ENCODE measurements at regions of chrX and their contacts with region 1.

Region 1: DNA sequence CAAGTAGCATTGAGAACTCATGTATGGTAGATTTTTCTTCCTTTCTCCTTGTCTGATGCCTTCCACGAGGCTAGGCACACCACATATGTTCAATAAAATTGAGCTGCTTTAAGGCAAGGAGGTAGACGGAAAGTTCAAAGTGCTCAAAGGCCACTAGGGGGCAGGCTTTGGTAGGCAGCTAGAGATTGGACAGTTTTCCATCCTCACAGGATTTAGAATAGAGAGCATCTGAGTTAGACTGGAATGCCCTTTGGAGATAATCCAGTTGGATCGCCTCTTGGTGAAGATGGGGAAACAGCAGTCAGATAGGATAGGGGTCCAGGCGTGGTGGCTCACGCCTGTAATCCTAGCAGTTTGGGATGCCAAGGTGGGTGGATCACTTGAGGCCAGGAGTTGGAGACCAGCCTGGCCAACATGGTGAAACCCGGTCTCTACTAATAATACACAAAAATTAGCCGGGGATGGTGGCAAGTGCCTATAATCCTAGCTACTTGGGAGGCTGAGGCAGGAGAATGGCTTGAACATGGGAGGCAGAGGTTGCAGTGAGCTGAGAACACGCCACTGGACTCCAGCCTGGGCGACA is 30.4 kb downstream of the ELF4 start:
- DNase-seq: peak; percentile 68
- ATAC-seq: no peak
- H3K4me3 Mint-ChIP-seq: no peak overlapping the region
- H3K27ac Mint-ChIP-seq: peak overlapping the region; percentile 46
- H3K4me1 Mint-ChIP-seq: peaks cover 50% of the 10 kb centered on the region
- H3K27me3 Mint-ChIP-seq: no peaks in the 10 kb centered on the region

Region 2: DNA sequence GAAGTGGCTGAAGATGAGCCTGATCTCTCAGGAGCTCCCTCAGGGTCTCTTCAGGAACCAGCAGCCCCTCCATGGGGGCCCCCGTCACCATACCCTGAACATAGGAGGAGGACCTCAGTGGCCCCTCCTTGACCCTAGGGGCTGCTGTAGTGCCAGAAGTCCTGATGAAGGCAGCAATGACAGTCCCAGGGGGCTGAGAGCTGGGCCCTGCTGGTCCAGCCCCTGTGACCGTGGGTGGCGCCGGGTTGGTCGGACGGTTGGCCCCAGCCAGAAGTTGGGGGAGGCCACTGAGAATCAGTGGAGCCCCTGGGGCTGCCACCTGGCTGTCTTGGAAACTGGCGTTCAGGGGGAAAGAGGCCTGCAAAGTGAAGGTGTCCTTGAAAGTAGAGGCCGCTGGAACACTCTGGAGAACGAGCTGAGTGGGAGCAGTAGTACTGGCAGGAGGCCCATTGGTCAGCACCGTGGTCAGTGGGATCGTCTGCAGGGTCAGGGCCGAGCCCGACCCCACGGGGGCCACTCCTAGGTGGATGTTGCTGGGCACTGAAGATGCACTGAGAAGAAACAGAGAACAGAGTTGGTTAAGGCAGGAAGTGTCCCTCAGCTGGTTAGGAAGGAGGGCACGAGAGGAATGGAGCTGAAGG is 12.8 kb before region 1 on chrX:
- CTCF ChIA-PET with region 1: interaction called, 14 read pairs
- POLR2A ChIA-PET with region 1: no interaction called
- DNase-seq: no peak
- ATAC-seq: no peak
- H3K4me3 Mint-ChIP-seq: no peak overlapping the region
- H3K27ac Mint-ChIP-seq: no peak overlapping the region
- H3K4me1 Mint-ChIP-seq: no peaks in the 10 kb centered on the region
- H3K27me3 Mint-ChIP-seq: no peaks in the 10 kb centered on the region

Region 3: DNA sequence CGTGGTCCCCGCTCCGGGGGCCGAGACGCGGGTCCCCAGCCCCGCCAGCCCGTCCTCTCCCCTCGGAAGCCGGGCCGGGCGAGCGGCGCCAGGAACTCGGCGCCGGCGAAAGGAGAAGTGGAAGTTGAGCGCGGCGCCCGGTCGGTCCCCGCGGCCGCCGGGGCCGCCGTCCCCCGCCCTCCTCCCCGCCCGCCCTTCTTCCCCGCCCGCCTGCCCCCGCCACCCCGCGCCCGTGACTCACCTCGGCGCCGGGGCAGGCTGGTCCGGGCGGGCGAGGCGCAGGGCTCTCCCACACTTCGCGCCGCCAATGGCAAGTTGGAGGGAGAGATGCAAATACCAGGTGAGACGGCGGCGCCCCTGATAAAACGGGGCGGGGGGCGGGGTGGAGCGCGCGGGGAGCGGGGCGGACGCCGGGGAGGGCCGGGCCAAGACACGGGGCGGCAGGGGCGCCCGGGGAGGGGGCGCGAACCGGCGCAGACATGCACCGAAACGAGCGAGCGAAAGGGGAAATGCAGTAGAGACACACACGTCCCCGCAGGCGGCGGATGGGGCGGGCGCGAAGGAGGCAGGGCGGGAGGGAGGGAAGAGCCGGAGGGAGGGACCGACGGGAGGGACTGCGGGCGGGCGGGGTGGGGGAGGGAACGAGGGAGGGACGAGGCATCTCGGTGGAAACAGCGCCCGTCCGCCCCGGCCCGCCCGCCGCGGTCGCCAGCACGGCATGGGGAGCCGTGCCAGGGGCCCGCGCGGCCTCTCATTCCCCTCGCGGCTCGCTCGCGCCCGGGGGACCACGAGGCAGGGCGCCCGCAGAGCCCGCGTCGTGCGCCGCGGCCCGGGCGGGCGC is 30.7 kb after region 1 on chrX and contains the start of gene ELF4:
- CTCF ChIA-PET with region 1: interaction called, 10 read pairs
- POLR2A ChIA-PET with region 1: interaction called, 6 read pairs
- DNase-seq: peak; percentile 57
- ATAC-seq: peak; percentile 69
- H3K4me3 Mint-ChIP-seq: peak within 1 kb of the TSS; percentile 89
- H3K27ac Mint-ChIP-seq: peak within 1 kb of the TSS; percentile 85
- H3K4me1 Mint-ChIP-seq: peaks cover 43% of the 10 kb centered on the region
- H3K27me3 Mint-ChIP-seq: no peaks in the 10 kb centered on the region
- total RNA-seq, gene ELF4: 38.2 to 39.0 TPM

Region 4: DNA sequence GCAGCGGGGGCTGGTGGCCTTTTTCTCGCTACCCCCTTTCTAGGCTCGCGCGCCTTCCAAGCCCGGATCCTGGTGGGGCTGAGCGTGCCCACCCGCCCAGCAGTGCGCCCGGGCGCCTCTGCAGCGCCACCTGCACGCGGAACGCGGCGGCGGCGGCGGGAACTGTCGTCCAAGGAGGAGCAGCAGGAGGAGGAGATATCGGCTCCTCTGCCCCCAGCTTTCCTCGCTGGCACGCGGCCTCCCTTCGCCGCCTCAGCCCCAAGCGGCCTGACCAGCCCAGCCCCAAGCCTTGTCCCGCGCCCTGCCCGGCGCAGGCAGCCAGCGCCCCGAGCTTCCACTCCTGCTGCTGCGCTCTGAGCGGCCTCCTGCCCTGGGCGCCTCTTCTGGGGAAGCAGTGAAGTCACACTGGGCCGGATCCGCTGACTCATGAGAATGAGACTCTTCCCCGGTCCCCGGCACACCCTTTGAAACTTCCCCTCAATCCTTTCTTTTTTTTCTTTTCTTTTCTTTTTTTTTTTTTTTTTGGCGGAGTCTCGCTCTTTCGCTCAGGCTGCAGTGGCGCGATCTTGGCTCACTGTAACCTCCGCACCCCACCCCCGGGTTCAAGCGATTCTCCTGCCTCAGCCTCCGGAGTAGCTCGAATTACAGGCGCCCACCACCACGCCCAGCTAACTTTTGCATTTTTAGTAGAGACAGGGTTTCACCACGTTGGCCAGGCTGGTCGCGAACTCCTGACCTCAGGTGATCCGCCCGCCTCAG is 41.0 kb after region 1 on chrX:
- CTCF ChIA-PET with region 1: interaction called, 72 read pairs
- POLR2A ChIA-PET with region 1: interaction called, 5 read pairs
- DNase-seq: peak; percentile 71
- ATAC-seq: peak; percentile 94
- H3K4me3 Mint-ChIP-seq: peak overlapping the region; percentile 63
- H3K27ac Mint-ChIP-seq: no peak overlapping the region
- H3K4me1 Mint-ChIP-seq: peaks cover 28% of the 10 kb centered on the region
- H3K27me3 Mint-ChIP-seq: no peaks in the 10 kb centered on the region

Region 5: DNA sequence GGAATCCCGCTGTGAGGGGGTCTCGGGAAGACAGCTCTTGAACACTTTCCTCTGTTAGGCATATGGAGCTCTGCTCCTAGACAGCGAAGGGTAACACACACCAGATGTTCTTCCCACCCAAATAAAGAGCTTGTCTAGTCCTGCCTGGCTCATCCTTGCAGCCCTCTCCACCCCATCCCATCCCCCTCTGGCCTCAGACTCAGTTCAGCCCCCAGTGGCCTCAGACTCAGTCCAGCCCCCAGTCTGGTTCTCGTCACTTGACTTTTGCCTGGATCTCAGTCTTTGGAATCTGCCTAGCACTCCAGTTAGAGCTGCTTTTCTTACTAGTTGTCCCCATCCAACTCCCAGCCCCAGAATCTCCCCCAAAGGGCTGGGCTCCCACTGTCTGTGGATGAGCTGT is 106.7 kb after region 1 on chrX:
- CTCF ChIA-PET with region 1: interaction called, 65 read pairs
- POLR2A ChIA-PET with region 1: no interaction called
- DNase-seq: no peak
- ATAC-seq: no peak
- H3K4me3 Mint-ChIP-seq: no peak overlapping the region
- H3K27ac Mint-ChIP-seq: no peak overlapping the region
- H3K4me1 Mint-ChIP-seq: peaks cover 20% of the 10 kb centered on the region
- H3K27me3 Mint-ChIP-seq: no peaks in the 10 kb centered on the region

Region 6: DNA sequence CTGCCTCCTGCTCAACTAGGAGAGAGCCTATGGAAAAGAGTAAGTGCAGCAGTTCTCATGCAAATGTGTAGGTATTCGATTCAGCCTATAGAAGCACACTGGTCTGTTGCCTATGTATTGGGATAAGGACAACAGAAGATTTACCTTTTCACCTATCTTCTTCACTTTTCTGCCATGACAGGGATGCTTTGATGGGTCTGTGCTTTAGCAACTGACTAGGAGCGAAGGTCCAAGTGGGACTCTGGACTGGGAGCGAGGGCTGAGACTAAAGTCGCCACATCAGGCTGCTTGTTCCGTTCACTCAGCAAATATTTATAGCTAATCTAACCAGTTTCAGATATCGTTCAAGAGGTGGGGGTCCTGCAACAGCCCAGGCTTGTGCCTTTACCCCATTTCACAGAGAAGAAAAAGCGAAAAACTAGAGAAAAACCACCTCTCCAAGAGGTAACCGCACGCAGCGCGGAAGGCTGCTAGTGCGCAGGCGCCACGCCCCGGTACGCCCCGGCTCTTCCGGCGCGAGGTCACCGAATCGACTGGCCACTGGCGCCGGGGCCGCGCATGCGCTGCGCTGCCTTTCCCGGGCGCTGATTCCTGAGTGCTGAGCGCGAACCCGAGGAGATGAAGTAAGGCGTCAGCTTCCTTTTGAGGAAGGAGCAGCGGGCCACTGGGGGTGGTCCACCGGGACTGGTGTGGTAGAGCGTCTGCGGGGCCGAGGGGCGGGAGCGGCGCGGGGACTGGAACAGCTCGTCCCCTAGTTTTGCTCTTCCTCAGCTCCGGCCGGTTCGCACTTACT is 321.7 kb after region 1 on chrX and contains the start of gene RBMX2:
- CTCF ChIA-PET with region 1: no interaction called
- POLR2A ChIA-PET with region 1: no interaction called
- DNase-seq: peak; percentile 72
- ATAC-seq: peak; percentile 93
- H3K4me3 Mint-ChIP-seq: peak within 1 kb of the TSS; percentile 91
- H3K27ac Mint-ChIP-seq: peak within 1 kb of the TSS; percentile 88
- H3K4me1 Mint-ChIP-seq: peaks cover 15% of the 10 kb centered on the region
- H3K27me3 Mint-ChIP-seq: peaks cover 6% of the 10 kb centered on the region
- total RNA-seq, gene RBMX2: 25.2 to 25.3 TPM